Naive thymus-derived CD4-positive, alpha-beta T cell (primary cell): ENCODE measurements at regions of chr10 and their contacts with region 1.

Region 1: DNA sequence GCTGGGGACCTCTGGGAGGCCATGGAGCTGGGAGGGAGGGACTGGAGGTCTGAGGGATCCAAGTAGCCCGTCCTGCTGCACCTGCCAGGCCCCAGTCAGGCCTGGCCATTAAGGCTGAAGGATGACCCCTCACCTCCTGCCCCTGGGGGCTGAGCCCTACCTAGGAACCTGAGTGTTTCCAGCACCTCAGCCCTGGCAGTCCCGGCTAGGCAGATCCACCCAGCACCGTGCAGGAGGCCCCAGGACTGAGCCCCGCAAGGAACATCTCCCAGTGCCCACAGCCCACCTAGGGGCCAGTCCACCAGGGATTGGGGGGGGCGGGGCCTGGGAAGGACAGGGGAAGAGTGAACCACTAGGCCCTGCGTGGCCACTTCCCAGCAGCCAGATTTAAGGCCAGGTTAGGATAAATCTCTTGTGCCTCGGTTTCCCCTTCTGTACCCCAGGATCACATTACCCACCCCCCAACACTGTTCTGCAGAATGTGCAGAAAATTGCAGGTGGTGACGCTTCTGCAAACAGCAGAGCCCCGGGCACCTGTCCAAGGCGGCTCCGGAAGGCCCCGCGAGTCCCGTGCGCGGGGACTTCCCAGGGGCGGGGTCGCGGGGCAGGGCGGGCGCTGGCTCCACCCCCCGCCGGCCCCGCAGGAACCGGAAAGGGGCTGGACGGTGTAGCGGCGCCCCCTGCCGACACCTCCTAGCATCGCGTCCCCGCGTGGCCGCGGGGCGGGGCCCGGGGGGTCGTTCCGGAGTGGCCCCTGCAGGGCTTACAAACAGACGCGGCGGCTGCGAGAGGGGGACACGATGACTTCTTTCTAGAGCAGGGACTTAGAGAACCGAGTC is 55.9 kb downstream of the PWWP2B start:
- DNase-seq: peak; percentile 87 to 96 (median 93)
- ATAC-seq: peak; percentile 94
- H3K4me3 ChIP-seq: peak overlapping the region; percentile 31
- H3K4me3 Mint-ChIP-seq: peak overlapping the region; percentile 33 to 72 (median 62)
- H3K27ac ChIP-seq: peak overlapping the region; percentile 88
- H3K27ac Mint-ChIP-seq: peak overlapping the region; percentile 85 to 97 (median 93)
- H3K4me1 ChIP-seq: peaks cover 13 to 23% of the 10 kb centered on the region in 2 donors
- H3K4me1 Mint-ChIP-seq: peaks cover 11 to 34% (median 23%) of the 10 kb centered on the region in 7 donors
- H3K27me3 ChIP-seq: no peaks in the 10 kb centered on the region
- H3K27me3 Mint-ChIP-seq: no peaks in the 10 kb centered on the region

Region 2: DNA sequence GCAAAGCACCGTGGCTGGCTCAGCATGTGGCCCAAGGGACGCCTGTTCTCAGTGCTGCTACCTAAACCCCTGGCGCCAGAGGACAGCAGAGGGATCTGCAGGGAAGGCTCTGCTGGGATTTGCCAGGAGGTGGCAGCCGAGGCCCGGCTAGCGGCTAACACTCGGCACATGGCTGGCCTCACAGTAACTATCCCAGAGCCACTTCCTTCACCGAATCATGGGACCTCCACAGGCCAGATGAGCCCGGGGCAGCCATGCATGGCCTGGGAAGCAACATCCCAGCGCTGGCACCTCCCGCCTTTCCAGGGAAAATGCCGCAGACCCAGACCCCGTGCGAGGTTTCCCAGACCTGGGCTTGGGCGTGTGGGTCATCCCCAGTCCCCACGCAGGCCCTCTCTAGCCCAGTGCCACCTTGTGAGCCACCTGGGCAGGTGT is 229.7 kb before region 1 on chr10:
- CTCF ChIA-PET with region 1: interaction called, 5 read pairs
- POLR2A ChIA-PET with region 1: no interaction called
- intact Hi-C with region 1: loop called (anchors 1 kb)
- DNase-seq: peak; percentile 40 to 73 (median 60)
- ATAC-seq: peak; percentile 96
- H3K4me3 ChIP-seq: no peak overlapping the region
- H3K4me3 Mint-ChIP-seq: no peak overlapping the region
- H3K27ac ChIP-seq: no peak overlapping the region
- H3K27ac Mint-ChIP-seq: no peak overlapping the region
- H3K4me1 ChIP-seq: peaks cover 0 to 6% of the 10 kb centered on the region in 2 donors
- H3K4me1 Mint-ChIP-seq: peaks cover 0 to 8% (median 5%) of the 10 kb centered on the region in 7 donors
- H3K27me3 ChIP-seq: no peaks in the 10 kb centered on the region
- H3K27me3 Mint-ChIP-seq: no peaks in the 10 kb centered on the region

Region 3: DNA sequence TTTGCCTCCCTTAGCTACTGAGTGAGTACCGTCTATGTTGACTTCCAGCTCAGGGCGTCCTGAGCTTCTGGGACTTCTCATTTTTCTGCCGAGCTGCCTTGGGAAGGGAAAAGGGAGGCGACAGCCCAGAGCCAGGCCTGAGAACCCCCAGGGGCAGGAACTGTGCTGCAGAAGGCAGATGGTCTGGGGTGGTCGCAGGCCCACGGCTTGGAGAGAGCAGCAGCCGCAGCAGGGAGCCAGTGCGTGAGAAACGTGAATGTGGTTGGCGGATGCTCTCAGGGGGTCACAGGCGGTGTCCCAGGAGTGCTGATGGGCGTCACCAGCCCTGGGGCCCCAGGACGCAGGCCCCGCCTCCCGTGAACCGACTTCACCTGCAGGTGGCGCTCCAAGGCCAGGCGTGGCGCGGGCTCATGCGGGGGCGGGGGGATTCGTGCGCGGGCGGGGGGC is 65.1 kb before region 1 on chr10:
- CTCF ChIA-PET with region 1: interaction called, 12 read pairs
- POLR2A ChIA-PET with region 1: interaction called, 7 read pairs
- intact Hi-C with region 1: loop called (anchors 1 kb)
- DNase-seq: peak; percentile 63 to 87 (median 77)
- ATAC-seq: peak; percentile 94
- H3K4me3 ChIP-seq: peak overlapping the region; percentile 35
- H3K4me3 Mint-ChIP-seq: peak overlapping the region in 9 of 10 donors; percentile 29 to 76 (median 62)
- H3K27ac ChIP-seq: peak overlapping the region; percentile 2
- H3K27ac Mint-ChIP-seq: peak overlapping the region in 7 of 9 donors; percentile 43 to 82 (median 70)
- H3K4me1 ChIP-seq: peaks cover 5 to 6% of the 10 kb centered on the region in 2 donors
- H3K4me1 Mint-ChIP-seq: peaks cover 3 to 22% (median 11%) of the 10 kb centered on the region in 7 donors
- H3K27me3 ChIP-seq: no peaks in the 10 kb centered on the region
- H3K27me3 Mint-ChIP-seq: no peaks in the 10 kb centered on the region

Region 4: DNA sequence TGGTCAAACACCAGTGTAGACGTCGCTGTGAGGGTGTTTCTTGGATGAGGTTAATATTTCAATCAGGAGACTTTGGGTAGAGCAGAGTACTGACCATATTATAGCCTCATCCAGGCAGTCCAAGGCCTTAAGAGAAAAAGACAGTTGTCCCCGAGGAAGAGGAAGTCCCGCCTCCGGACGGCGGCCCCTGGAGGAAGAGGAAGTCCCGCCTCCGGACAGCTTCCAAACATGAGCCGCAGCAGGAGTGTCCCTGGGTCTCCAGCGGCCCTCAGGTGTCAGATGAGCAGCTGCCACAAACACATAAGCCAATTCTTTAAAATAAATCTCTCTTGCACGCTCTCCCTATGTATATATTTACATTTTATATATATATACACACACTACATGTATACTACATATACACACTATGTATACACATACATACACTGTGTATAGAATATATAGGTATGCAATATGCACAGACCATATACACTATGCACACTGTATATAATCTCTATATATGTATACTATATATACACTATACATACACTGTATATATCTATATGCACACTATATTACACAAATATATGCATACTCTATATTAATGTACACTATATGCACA is 18.3 kb before region 1 on chr10:
- CTCF ChIA-PET with region 1: no interaction called
- POLR2A ChIA-PET with region 1: interaction called, 4 read pairs
- intact Hi-C with region 1: loop called in 1 of 2 experiments (anchors 2 kb)
- DNase-seq: peak in 7 of 9 donors; percentile 38 to 61 (median 50)
- ATAC-seq: peak; percentile 67
- H3K4me3 ChIP-seq: no peak overlapping the region
- H3K4me3 Mint-ChIP-seq: peak overlapping the region; percentile 5 to 79 (median 60)
- H3K27ac ChIP-seq: peak overlapping the region; percentile 10
- H3K27ac Mint-ChIP-seq: peak overlapping the region in 5 of 9 donors; percentile 57 to 79 (median 67)
- H3K4me1 ChIP-seq: peaks cover 0 to 4% of the 10 kb centered on the region in 2 donors
- H3K4me1 Mint-ChIP-seq: peaks cover 5 to 14% (median 8%) of the 10 kb centered on the region in 7 donors
- H3K27me3 ChIP-seq: no peaks in the 10 kb centered on the region
- H3K27me3 Mint-ChIP-seq: no peaks in the 10 kb centered on the region

Region 5: DNA sequence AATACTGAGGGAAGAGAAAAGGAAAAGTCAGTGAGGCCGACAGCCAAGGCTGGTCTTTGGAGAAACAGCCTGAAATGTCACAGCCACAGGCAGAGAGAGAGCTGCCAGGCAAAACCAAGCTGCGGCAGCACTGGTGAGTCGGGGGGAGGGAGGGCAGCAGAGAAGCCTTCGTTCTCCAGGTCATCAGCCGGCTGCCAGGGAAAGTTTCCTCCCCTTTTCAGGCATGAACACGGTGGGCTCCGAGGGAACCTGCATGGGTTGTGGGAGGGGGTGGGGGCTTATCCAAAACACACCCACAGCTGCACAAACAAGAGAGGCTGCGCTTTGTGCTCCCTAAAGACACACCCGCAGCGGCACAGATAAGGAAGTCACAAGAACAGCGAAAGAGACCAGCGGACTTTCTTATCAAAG is 395.4 kb after region 1 on chr10:
- CTCF ChIA-PET with region 1: no interaction called
- POLR2A ChIA-PET with region 1: no interaction called
- intact Hi-C with region 1: no loop called
- DNase-seq: peak in 2 of 9 donors; percentile 8 to 28
- ATAC-seq: no peak
- H3K4me3 ChIP-seq: peak overlapping the region; percentile 16
- H3K4me3 Mint-ChIP-seq: peak overlapping the region; percentile 19 to 90 (median 80)
- H3K27ac ChIP-seq: no peak overlapping the region
- H3K27ac Mint-ChIP-seq: peak overlapping the region in 7 of 9 donors; percentile 7 to 70 (median 56)
- H3K4me1 ChIP-seq: no peaks in the 10 kb centered on the region
- H3K4me1 Mint-ChIP-seq: peaks cover 5 to 14% (median 11%) of the 10 kb centered on the region in 7 donors
- H3K27me3 ChIP-seq: no peaks in the 10 kb centered on the region
- H3K27me3 Mint-ChIP-seq: peaks cover 0 to 8% (median 7%) of the 10 kb centered on the region in 5 donors